Motor neuron (in vitro differentiated cells): ENCODE measurements at regions of chr9 and their contacts with region 1.

Region 1: GRCh38 chr9:115524453-115525059 is 406.6 kb upstream of the TNC start:
- ATAC-seq: peak; percentile 40 to 78 (median 66)
- H3K4me3 ChIP-seq: no peak overlapping the region
- H3K27ac ChIP-seq: no peak overlapping the region
- H3K4me1 ChIP-seq: no peaks in the 10 kb centered on the region

Region 2: GRCh38 chr9:114405294-114406034 is 1119.1 kb before region 1 on chr9:
- in situ Hi-C with region 1: loop called in 1 of 9 experiments (anchors 25 kb)
- ATAC-seq: peak; percentile 85 to 97 (median 92)
- H3K4me3 ChIP-seq: no peak overlapping the region
- H3K27ac ChIP-seq: no peak overlapping the region
- H3K4me1 ChIP-seq: peaks cover 0 to 13% of the 10 kb centered on the region in 2 donors

Region 3: GRCh38 chr9:114653556-114654159 is 870.9 kb before region 1 on chr9:
- in situ Hi-C with region 1: loop called in 2 of 9 experiments (anchors 25 kb)
- ATAC-seq: peak; percentile 59 to 86 (median 67)
- H3K4me3 ChIP-seq: no peak overlapping the region
- H3K27ac ChIP-seq: no peak overlapping the region
- H3K4me1 ChIP-seq: no peaks in the 10 kb centered on the region

Region 4: GRCh38 chr9:114718801-114719221 is 805.7 kb before region 1 on chr9:
- in situ Hi-C with region 1: loop called in 1 of 9 experiments (anchors 25 kb)
- ATAC-seq: peak in 1 of 8 experiments; percentile 31
- H3K4me3 ChIP-seq: no peak overlapping the region
- H3K27ac ChIP-seq: no peak overlapping the region
- H3K4me1 ChIP-seq: peaks cover 5 to 15% of the 10 kb centered on the region in 2 donors

Region 5: GRCh38 chr9:114738581-114739316 is 785.8 kb before region 1 on chr9:
- in situ Hi-C with region 1: loop called in 1 of 9 experiments (anchors 25 kb)
- ATAC-seq: peak in 6 of 8 experiments; percentile 31 to 92 (median 82)
- H3K4me3 ChIP-seq: no peak overlapping the region
- H3K27ac ChIP-seq: no peak overlapping the region
- H3K4me1 ChIP-seq: no peaks in the 10 kb centered on the region

Region 6: GRCh38 chr9:114906908-114907571 is 617.5 kb before region 1 on chr9:
- in situ Hi-C with region 1: loop called in 1 of 9 experiments (anchors 25 kb)
- ATAC-seq: peak in 7 of 8 experiments; percentile 30 to 71 (median 51)
- H3K4me3 ChIP-seq: no peak overlapping the region
- H3K27ac ChIP-seq: no peak overlapping the region
- H3K4me1 ChIP-seq: peaks cover 7 to 8% of the 10 kb centered on the region in 2 donors

Region 7: GRCh38 chr9:115234094-115234493 is 290.5 kb before region 1 on chr9:
- in situ Hi-C with region 1: loop called in 1 of 9 experiments (anchors 25 kb)
- ATAC-seq: peak; percentile 61 to 99 (median 93)
- H3K4me3 ChIP-seq: no peak overlapping the region
- H3K27ac ChIP-seq: peak overlapping the region; percentile 16 to 25
- H3K4me1 ChIP-seq: peaks cover 10 to 11% of the 10 kb centered on the region in 2 donors